Heart left ventricle (tissue), 16 donors: ENCODE measurements at regions of chr18 and their contacts with region 1.

Region 1: DNA sequence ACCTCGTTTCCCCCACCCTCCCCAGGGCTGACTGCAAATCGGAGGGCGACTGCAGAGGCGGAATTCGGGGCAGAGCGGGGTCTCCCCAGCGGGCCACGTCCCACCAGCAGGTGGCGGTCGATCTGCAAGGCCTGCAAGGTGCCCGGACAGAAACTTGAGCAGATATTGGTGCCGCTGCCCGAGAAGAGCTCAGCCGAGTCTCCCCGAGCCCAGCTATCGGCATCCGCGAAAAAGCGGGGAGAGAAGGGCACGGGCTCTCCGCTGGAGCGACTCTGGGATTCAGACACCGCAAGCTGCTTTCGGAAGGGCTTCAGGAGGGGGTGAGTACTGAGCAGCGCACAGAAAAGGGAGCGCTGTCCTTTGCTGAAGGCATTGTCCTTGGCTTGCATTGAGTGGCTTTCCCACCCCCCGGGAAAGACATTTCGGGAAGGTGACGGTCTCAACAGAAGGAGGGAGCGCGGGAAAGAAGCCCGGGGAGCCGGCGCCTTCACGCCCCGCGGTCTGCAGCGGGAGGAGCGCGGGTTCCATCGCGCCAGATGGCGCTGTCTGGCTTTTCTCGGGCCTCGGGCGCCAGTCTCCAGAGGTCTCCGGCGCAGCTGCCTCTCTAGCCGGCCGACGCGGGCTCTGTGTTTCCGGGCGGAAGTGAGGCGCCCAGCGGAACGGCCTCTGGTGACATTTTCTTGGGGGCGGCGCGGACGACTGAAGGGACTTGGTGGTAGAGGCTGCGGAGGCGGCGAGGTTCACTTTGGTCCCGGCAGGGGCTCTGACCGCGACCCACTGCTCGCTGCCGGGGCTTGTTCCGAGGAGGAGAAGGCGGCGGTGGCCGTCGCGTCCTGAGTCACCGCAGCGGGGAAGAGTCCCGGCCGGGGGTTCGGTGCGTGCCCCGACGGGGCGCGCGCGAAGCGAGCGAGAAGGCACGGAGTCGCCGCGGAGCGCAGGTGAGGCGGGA is 69.5 kb downstream of the HAUS1 start:
- DNase-seq: peak; percentile 94 to 97 (median 96)
- ATAC-seq: peak; percentile 94 to 99 (median 98)
- H3K4me3 ChIP-seq: peak overlapping the region; percentile 74 to 99 (median 96)
- H3K27ac ChIP-seq: peak overlapping the region; percentile 45 to 96 (median 93)
- H3K4me1 ChIP-seq: peaks cover 3 to 39% (median 22%) of the 10 kb centered on the region in 12 donors
- H3K27me3 ChIP-seq: no peaks in the 10 kb centered on the region
- CTCF ChIP-seq: peak; percentile 69 to 85 (median 78)
- POLR2A ChIP-seq: peak in 1 of 2 donors; percentile 69

Region 2: GRCh38 chr18:46104128-46104911 is 69.3 kb before region 1 on chr18 and contains the start of gene HAUS1:
- intact Hi-C with region 1: loop called in 1 of 10 experiments (anchors 5 kb)
- DNase-seq: peak; percentile 93 to 96 (median 94)
- ATAC-seq: peak; percentile 91 to 98 (median 98)
- H3K4me3 ChIP-seq: peak within 1 kb of the TSS; percentile 70 to 98 (median 80)
- H3K27ac ChIP-seq: peak within 1 kb of the TSS; percentile 30 to 91 (median 84)
- H3K4me1 ChIP-seq: peaks cover 0 to 12% (median 6%) of the 10 kb centered on the region in 12 donors
- H3K27me3 ChIP-seq: no peaks in the 10 kb centered on the region
- CTCF ChIP-seq: no peak
- POLR2A ChIP-seq: peak; percentile 32 to 77
- total RNA-seq, gene HAUS1: 6.7 to 15.1 (median 9.5) TPM

Region 3: DNA sequence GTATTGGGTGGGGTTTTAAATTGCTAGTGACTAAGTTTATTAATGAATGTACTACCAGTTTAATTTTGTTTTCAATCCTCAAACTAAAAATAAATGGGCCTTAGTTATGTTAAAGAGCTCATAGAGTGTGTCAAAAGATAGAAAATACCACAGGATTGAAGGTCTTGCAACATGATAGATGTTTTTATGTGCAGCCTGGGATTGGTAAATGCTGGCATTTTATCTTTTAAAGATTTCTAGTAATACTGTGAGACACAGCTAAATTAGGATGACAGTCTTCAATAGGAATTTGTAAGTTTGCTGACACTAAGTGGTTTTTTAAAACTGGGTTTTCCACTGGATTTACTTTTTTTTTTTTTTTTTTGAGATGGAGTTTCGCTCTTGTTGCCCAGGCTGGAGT is 52.8 kb after region 1 on chr18:
- intact Hi-C with region 1: no loop called
- DNase-seq: no peak
- ATAC-seq: no peak
- H3K4me3 ChIP-seq: no peak overlapping the region
- H3K27ac ChIP-seq: no peak overlapping the region
- H3K4me1 ChIP-seq: peaks cover 0 to 43% (median 22%) of the 10 kb centered on the region in 12 donors
- H3K27me3 ChIP-seq: no peaks in the 10 kb centered on the region
- CTCF ChIP-seq: no peak
- POLR2A ChIP-seq: no peak

Region 4: DNA sequence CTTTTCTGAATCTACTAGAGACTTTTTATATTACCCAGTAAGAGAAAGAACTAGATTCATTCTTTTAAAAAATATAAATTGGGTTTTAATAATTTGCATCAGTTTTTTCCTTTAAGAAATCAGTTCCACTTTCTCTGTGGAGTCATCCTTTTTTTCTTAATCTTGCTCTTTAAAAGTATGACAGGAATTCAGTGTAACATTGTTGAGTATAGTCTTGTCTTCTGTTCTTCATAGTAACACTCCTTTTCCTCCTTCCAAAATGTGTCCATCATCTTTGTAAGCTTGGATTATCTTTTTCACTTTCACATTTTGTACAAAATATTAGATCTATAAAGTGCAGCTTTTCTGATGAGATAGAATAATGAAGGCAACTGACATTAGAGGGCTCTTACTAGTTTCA is 65.9 kb after region 1 on chr18:
- intact Hi-C with region 1: no loop called
- DNase-seq: no peak
- ATAC-seq: no peak
- H3K4me3 ChIP-seq: no peak overlapping the region
- H3K27ac ChIP-seq: no peak overlapping the region
- H3K4me1 ChIP-seq: peaks cover 0 to 19% (median 6%) of the 10 kb centered on the region in 12 donors
- H3K27me3 ChIP-seq: no peaks in the 10 kb centered on the region
- CTCF ChIP-seq: no peak
- POLR2A ChIP-seq: no peak

Region 5: DNA sequence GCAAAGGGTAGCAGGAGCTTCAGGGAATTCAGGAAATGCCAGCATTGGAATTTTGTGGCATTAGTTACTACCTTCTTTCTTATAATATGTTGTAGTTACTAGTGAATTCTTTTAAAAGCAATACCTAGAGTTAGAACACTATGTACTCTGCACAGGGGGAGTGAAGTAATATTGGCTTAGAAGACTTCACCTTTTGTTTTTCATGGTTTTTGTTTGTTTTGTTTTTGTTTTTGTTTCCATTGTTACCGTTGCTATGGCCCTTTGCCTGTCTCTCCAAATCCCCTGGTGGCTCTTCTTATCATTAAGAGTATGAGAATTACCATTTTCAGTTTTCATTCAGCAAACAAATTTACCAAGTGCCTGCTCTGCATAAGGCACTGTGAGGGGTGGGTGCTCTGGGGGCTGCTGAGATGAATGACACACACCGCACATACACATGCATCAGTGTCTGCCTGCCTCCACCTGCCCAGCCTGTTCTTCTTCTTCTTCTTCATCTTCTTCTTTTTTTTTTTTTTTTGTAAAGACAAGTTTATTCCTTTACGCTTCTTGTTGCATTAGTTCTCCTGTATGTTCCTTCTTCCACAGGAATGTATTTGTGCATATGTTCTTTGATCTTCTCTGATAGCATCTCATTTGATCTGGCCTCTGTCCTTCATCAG is 90.7 kb after region 1 on chr18:
- intact Hi-C with region 1: loop called in 6 of 10 experiments (anchors 5 to 10 kb)
- DNase-seq: no peak
- ATAC-seq: peak in 3 of 4 donors; percentile 35 to 44 (median 36)
- H3K4me3 ChIP-seq: no peak overlapping the region
- H3K27ac ChIP-seq: peak overlapping the region in 8 of 12 donors; percentile 0 to 53 (median 46)
- H3K4me1 ChIP-seq: peaks cover 0 to 69% (median 34%) of the 10 kb centered on the region in 12 donors
- H3K27me3 ChIP-seq: no peaks in the 10 kb centered on the region
- CTCF ChIP-seq: peak in 1 of 12 donors; percentile 6
- POLR2A ChIP-seq: no peak

Region 6: DNA sequence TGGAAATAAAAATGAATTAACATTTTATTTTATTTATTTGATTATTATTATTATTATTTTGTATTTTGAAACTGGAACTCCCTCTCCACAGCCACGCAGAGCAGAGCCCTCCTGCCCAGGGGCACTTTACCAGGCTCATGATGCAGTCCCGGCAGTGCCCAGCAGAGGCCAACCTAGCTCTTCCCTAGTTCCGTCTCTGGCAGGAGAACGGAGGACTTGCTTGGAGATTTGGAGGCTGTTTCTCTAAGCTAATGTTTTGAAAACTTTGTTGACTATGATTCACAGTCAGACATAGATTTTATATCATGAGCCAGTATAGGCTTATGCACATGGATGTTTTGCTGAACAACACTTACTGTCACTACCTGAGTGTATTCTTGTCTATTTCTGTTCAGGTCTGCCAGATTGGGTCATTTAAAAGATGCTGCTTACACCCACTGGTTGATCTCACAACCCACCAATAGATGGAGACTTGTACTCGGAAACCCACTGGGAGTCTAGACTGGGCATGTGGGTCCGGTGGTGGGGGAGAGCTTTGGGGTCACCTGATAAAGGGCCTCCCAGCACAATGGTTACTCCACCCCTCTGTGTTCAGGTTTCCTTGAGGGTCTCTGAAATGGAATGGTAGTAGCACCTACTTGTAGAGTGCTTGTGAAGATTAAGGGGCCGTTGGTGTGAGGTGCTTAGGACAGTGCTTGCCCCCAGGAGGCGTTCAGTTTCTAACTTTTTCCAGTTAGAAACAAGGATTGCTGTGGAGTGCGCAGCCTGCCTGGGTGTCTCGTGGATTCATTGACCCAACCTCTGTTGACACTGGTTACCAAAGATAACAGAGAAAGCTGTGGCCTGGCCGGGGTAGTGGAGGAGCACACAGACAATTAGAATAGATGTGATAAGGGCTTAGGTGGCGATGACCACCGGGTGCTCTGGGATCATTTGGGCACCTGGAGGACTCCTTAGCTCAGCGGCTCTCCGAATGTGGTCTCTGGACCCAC is 107.8 kb after region 1 on chr18:
- intact Hi-C with region 1: loop called in 3 of 10 experiments (anchors 5 to 10 kb)
- DNase-seq: peak; percentile 57 to 76 (median 63)
- ATAC-seq: peak; percentile 80 to 94 (median 84)
- H3K4me3 ChIP-seq: no peak overlapping the region
- H3K27ac ChIP-seq: no peak overlapping the region
- H3K4me1 ChIP-seq: peaks cover 0 to 19% (median 9%) of the 10 kb centered on the region in 12 donors
- H3K27me3 ChIP-seq: no peaks in the 10 kb centered on the region
- CTCF ChIP-seq: peak; percentile 84 to 98 (median 94)
- POLR2A ChIP-seq: no peak

Region 7: DNA sequence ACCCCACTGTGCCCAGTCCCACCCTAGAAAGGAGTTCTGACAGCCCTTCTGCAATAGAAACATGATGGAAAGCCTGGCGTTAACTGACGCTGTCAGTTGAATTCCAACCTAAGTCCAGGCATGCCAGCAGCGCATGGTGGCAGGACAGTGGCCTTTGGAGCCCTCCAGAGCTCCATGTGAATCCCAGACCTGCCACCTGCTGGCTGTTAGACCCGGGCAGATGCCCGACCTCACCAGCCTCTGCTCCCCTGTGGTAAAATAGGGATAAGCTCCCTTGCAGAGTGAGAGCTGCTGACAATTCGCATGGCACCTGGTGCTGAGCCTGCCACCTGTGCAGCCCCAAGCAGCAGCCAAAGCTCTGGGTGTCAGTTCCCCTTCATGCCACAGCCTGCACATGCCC is 344.8 kb after region 1 on chr18:
- intact Hi-C with region 1: loop called in 2 of 10 experiments (anchors 5 to 10 kb)
- DNase-seq: peak in 4 of 5 donors; percentile 23 to 68 (median 52)
- ATAC-seq: peak; percentile 84 to 97 (median 94)
- H3K4me3 ChIP-seq: no peak overlapping the region
- H3K27ac ChIP-seq: no peak overlapping the region
- H3K4me1 ChIP-seq: no peaks in the 10 kb centered on the region
- H3K27me3 ChIP-seq: no peaks in the 10 kb centered on the region
- CTCF ChIP-seq: peak in 11 of 12 donors; percentile 31 to 61 (median 49)
- POLR2A ChIP-seq: no peak